AG04449 (cell line): ENCODE measurements at regions of chr3 and their contacts with region 1.

Region 1: GRCh38 chr3:112814266-112814665 is 32.4 kb downstream of the CD200R1L start:
- DNase-seq: peak; percentile 69
- H3K4me3 ChIP-seq: no peak overlapping the region
- CTCF ChIP-seq: peak; percentile 56

Region 2: DNA sequence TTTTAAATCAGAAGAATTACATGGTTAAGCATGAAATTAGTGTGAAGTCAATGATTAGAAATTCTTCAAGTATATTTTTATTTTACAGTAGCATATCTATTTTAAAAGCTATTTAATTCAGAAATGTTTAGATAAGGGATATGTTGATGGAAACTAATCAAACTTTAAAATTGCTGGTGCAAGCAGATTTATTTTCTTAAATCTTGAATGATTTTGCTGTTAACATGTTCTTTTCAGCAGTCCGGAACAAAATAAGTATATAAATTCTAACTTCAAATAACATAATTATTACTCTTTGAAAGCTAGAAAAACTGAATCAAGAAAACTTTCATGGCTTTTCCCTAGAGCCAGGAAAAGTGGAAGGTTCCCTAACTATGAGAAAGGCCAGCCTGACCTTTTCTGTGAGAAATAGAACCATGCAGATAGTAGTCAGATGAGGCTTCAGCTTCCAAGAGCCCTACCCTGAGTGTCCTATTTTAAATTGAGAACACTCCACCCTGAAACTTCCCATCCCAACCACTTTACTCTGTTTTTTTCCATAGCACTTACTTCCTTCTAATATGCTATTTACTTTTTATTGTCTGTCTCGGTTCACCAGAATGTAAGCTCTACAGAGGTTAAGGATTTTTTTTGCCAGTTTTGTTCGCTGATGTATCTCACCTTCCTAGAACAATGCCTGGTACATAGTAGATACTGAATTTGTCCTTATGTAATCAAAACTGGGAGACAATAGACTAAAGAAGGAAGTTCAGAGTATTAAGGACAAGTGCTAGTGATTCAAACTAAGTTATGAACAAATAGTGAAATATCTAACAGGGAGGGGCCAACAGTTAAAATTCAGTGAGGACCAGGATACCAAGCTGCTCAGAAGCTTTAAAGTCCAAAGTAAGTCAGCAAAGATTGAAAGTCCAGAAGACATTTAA is 34.4 kb before region 1 on chr3:
- CTCF ChIA-PET with region 1: interaction called, 15 read pairs
- POLR2A ChIA-PET with region 1: interaction called, 7 read pairs
- DNase-seq: no peak
- H3K4me3 ChIP-seq: no peak overlapping the region
- CTCF ChIP-seq: no peak

Region 3: DNA sequence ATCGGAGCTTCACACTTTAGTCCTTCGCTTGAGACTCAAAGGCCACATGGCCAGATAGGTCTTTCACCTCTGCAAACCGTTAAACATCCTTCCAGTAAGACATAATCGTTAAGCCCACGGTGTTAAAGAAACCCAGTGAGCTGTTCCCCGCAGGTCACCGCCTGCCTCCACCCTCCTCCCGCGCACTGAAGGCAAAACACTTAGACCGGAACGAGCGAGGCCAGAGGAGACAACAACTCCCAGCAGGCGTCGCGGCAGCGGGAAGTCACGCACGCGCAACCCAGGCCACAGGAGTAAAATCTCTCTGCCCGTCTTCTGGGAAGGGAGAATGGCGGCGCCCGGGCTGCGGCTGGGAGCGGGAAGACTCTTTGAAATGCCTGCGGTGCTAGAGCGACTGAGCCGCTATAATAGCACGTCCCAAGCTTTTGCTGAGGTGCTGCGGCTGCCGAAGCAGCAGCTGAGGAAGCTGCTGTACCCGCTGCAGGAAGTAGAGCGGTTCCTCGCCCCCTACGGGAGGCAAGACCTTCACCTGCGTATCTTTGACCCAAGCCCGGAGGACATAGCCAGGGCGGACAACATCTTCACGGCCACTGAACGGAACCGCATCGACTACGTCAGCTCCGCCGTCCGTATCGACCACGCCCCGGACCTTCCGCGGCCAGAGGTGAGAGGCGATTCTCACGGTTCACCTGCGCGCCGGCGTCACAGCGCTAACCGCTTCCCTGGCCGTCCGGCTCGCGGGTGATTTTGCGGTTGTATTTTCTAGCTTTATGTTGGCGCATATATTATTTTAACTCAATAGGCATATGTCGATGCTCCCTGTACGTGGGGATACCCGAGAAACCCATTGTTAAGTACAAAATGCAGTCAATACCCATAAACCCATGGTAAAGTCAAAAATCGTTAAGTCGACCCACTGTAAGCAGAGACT is 176.7 kb after region 1 on chr3 and contains the start of gene GTPBP8:
- CTCF ChIA-PET with region 1: interaction called, 10 read pairs
- POLR2A ChIA-PET with region 1: no interaction called
- DNase-seq: peak; percentile 29
- H3K4me3 ChIP-seq: peak within 1 kb of the TSS; percentile 96
- CTCF ChIP-seq: peak; percentile 18

Region 4: DNA sequence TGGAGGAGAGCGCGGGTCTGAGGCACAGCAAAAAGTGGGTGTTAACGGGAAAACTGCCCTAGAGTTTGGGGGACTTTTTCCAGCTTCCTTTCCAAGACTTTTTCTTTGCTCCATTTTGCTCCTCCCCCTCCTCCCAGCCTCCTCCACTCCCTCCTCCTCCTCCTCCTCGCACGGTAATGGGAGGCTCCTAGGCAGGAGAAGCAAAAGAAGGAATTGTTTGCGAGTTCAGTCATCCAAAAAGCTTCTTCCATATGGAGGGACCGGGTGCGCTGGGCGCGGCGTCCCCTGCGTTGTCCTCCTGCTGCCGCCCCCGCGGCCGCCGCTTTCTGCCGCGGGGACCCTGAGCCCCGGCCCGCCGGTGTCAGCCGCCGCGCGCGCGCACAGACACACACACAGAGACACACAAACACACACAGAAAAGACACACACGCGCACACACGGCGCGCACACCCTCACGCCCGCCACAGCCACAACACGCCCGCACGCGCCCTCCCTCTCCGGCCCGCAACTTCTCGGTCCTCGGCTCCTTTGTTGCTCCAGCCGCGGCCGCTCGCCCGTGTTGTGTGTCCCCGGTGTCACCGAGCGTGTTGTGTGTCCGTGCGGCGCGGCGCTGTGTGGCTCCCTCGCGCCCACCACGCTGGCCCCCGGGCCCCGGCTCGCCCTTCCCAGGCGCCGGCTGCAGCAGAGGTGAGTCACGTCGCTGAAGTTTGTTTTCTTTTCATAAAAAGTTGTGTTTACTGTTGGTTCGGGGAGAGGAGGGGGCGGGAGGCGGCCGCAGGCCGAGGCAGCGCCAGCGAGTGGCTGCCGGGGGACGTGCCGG is 397.3 kb after region 1 on chr3 and contains the start of gene BOC:
- CTCF ChIA-PET with region 1: no interaction called
- POLR2A ChIA-PET with region 1: no interaction called
- DNase-seq: no peak
- H3K4me3 ChIP-seq: peak within 1 kb of the TSS; percentile 89
- CTCF ChIP-seq: no peak